Left colon (tissue), 2 donors: ENCODE measurements at regions of chr15 and their contacts with region 1.

Region 1: GRCh38 chr15:85329561-85330422 is 50.6 kb upstream of the AKAP13 start:
- DNase-seq: peak; percentile 43 to 45
- ATAC-seq: peak; percentile 69

Region 2: DNA sequence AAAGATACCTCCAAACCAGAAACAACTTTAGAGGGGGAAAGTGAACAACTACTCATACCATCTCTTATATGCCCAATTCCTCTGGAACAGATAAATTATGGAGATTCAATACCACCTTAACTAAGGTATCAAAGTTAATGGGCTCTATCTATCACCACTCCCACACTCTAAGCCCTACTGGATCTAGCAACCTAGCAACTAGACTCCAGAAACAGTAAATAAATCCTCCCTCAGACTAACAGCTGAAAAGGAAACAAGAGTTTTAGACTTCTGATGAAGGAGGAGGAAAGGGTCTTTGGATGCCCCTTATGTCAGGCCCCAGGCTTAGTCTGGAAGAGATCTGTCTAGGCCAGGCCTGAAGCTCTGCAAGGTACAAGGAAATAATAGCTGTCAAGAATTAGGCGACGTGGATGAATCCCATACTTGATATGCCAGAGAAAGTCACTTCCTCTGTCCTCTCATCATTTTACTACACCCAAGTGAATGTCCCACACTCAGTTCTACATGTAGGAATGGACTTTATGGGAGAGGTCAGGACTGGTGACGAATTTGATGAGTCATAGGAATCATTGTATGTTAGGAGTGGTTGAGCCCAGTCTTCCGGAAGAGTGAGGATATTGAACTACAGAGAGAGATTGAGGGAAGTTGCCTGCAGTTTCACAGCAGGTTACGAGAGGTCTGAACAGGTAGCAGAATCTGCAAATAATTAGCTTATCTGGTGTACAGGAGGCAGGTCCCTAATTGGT is 164.4 kb after region 1 on chr15:
- intact Hi-C with region 1: loop called in 1 of 2 experiments (anchors 10 kb)
- DNase-seq: peak in 1 of 2 donors; percentile 36
- ATAC-seq: peak; percentile 87